Endothelial cell of umbilical vein (primary cell): ENCODE measurements at regions of chr3 and their contacts with region 1.

Region 1: GRCh38 chr3:161253711-161254110 is 32.6 kb downstream of the NMD3 start:
- DNase-seq: peak; percentile 21
- H3K4me3 ChIP-seq: no peak overlapping the region
- H3K27ac ChIP-seq: no peak overlapping the region
- H3K4me1 ChIP-seq: no peaks in the 10 kb centered on the region
- H3K27me3 ChIP-seq: no peaks in the 10 kb centered on the region
- CTCF ChIP-seq: no peak
- POLR2A ChIP-seq: no peak

Region 2: GRCh38 chr3:161171113-161171512 is 82.6 kb before region 1 on chr3:
- CTCF ChIA-PET with region 1: no interaction called
- POLR2A ChIA-PET with region 1: no interaction called
- dilution Hi-C with region 1: no loop called
- intact Hi-C with region 1: no loop called
- DNase-seq: peak; percentile 84
- H3K4me3 ChIP-seq: no peak overlapping the region
- H3K27ac ChIP-seq: no peak overlapping the region
- H3K4me1 ChIP-seq: peaks cover 25% of the 10 kb centered on the region
- H3K27me3 ChIP-seq: no peaks in the 10 kb centered on the region
- CTCF ChIP-seq: no peak
- POLR2A ChIP-seq: peak; percentile 21

Region 3: GRCh38 chr3:161230621-161231171 is 23.0 kb before region 1 on chr3:
- CTCF ChIA-PET with region 1: interaction called, 4 read pairs
- POLR2A ChIA-PET with region 1: interaction called, 3 read pairs
- dilution Hi-C with region 1: no loop called
- intact Hi-C with region 1: loop called (anchors 2 kb)
- DNase-seq: no peak
- H3K4me3 ChIP-seq: no peak overlapping the region
- H3K27ac ChIP-seq: no peak overlapping the region
- H3K4me1 ChIP-seq: peaks cover 3% of the 10 kb centered on the region
- H3K27me3 ChIP-seq: no peaks in the 10 kb centered on the region
- CTCF ChIP-seq: no peak
- POLR2A ChIP-seq: no peak